ENCODE measurements at regions of chr9 and their contacts with region 1.

Region 1: DNA sequence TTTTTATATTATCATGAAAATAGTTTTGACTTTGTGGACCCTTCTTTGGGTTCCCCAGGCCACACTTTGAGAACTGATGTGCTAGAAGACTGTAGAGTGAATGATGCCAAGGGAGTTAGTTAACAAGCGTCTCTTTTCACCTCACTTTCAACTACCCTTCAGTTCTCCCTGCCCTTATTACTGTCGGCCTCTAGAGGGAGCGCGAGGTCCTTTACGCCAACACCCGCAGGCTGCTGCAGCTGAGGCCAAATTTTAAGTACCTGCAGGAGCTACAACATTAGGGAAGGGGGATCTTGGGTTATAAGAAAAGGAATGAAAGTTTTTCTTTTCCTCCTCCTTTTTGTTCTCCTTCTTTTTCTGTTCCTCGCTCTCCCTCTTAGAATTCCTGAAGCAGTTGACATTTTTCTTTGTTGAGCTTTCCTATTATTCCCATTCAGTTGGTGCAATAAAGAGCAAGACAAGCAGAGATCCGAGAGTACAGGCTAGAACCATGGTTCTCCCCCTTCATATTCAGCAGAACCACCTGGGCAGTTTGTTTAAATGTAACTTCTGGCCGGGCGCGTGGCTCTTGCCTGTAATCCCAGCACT is 84.0 kb downstream of the ZFAND5 start:
- DNase-seq: peak; percentile 50
- H3K4me3 ChIP-seq: no peak overlapping the region
- H3K27ac ChIP-seq: no peak overlapping the region
- H3K4me1 ChIP-seq: no peaks in the 10 kb centered on the region
- H3K27me3 ChIP-seq: no peaks in the 10 kb centered on the region
- CTCF ChIP-seq: peak; percentile 90 to 97

Region 2: DNA sequence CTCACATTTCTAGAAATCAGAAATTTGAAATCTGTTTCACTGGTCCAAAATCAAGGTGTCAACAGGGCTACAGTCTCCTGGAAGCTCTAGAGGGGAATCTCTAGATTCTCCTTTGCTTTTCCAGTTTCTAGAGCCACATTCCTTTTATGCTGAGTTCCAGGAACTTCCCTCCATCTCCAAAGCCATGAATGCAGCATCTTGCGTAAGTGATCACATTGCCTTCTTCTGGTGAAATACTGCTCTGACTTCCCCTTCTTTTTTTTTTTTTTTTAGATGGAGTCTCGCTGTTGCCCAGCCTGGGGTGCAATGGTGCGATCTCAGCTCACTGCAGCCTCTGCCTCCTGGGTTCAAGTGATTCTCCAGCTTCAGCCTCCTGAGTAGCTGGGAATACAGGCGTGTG is 107.9 kb before region 1 on chr9:
- CTCF ChIA-PET with region 1: no interaction called
- dilution Hi-C with region 1: no loop called
- in situ Hi-C with region 1: no loop called
- intact Hi-C with region 1: no loop called
- DNase-seq: no peak
- H3K4me3 ChIP-seq: no peak overlapping the region
- H3K27ac ChIP-seq: no peak overlapping the region
- H3K4me1 ChIP-seq: no peaks in the 10 kb centered on the region
- H3K27me3 ChIP-seq: peaks cover 2% of the 10 kb centered on the region
- CTCF ChIP-seq: no peak

Region 3: GRCh38 chr9:72721067-72721466 is 440.1 kb after region 1 on chr9:
- CTCF ChIA-PET with region 1: no interaction called
- dilution Hi-C with region 1: loop called (anchors 5 kb)
- in situ Hi-C with region 1: loop called in 1 of 2 experiments (anchors 25 kb)
- intact Hi-C with region 1: no loop called
- DNase-seq: no peak
- H3K4me3 ChIP-seq: no peak overlapping the region
- H3K27ac ChIP-seq: no peak overlapping the region
- H3K4me1 ChIP-seq: no peaks in the 10 kb centered on the region
- H3K27me3 ChIP-seq: no peaks in the 10 kb centered on the region
- CTCF ChIP-seq: no peak

Region 4: GRCh38 chr9:72753266-72753893 is 472.4 kb after region 1 on chr9:
- CTCF ChIA-PET with region 1: no interaction called
- dilution Hi-C with region 1: no loop called
- in situ Hi-C with region 1: loop called (anchors 10 to 25 kb)
- intact Hi-C with region 1: loop called (anchors 1 kb)
- DNase-seq: no peak
- H3K4me3 ChIP-seq: no peak overlapping the region
- H3K27ac ChIP-seq: no peak overlapping the region
- H3K4me1 ChIP-seq: no peaks in the 10 kb centered on the region
- H3K27me3 ChIP-seq: peaks cover 2% of the 10 kb centered on the region
- CTCF ChIP-seq: peak; percentile 48 to 62

Region 5: GRCh38 chr9:72843520-72844439 is 562.8 kb after region 1 on chr9:
- CTCF ChIA-PET with region 1: no interaction called
- dilution Hi-C with region 1: loop called (anchors 25 kb)
- in situ Hi-C with region 1: no loop called
- intact Hi-C with region 1: no loop called
- DNase-seq: peak; percentile 9
- H3K4me3 ChIP-seq: no peak overlapping the region
- H3K27ac ChIP-seq: no peak overlapping the region
- H3K4me1 ChIP-seq: no peaks in the 10 kb centered on the region
- H3K27me3 ChIP-seq: no peaks in the 10 kb centered on the region
- CTCF ChIP-seq: peak; percentile 21 to 29

Region 6: GRCh38 chr9:73081979-73082657 is 801.1 kb after region 1 on chr9:
- CTCF ChIA-PET with region 1: no interaction called
- dilution Hi-C with region 1: no loop called
- in situ Hi-C with region 1: no loop called
- intact Hi-C with region 1: loop called (anchors 5 kb)
- DNase-seq: peak; percentile 24
- H3K4me3 ChIP-seq: no peak overlapping the region
- H3K27ac ChIP-seq: no peak overlapping the region
- H3K4me1 ChIP-seq: no peaks in the 10 kb centered on the region
- H3K27me3 ChIP-seq: peaks cover 4% of the 10 kb centered on the region
- CTCF ChIP-seq: peak; percentile 74 to 83